WTC11 (cell line): ENCODE measurements at regions of chr5 and their contacts with region 1.

Region 1: GRCh38 chr5:140795259-140795641 is 598 bp downstream of the PCDHA2 start:
- DNase-seq: no peak
- ATAC-seq: peak; percentile 88
- H3K4me3 Mint-ChIP-seq: peak overlapping the region; percentile 87
- H3K27ac Mint-ChIP-seq: 0 out of 2 replicates have a peak overlapping the region, but pooled peaks have one; percentile 27
- H3K4me1 Mint-ChIP-seq: peaks cover 4% of the 10 kb centered on the region; the same call in 1 of the 2 replicates
- H3K27me3 Mint-ChIP-seq: no peaks in the 10 kb centered on the region
- CTCF ChIP-seq: no peak

Region 2: GRCh38 chr5:140821375-140822280 is 26.4 kb after region 1 on chr5 and contains the start of gene PCDHA5:
- CTCF ChIA-PET with region 1: interaction called, 10 read pairs
- POLR2A ChIA-PET with region 1: no interaction called
- DNase-seq: no peak
- ATAC-seq: no peak
- H3K4me3 Mint-ChIP-seq: peak within 1 kb of the TSS; percentile 30; the same call in 1 of the 2 replicates
- H3K27ac Mint-ChIP-seq: no peak within 1 kb of the TSS
- H3K4me1 Mint-ChIP-seq: no peaks in the 10 kb centered on the region
- H3K27me3 Mint-ChIP-seq: no peaks in the 10 kb centered on the region
- CTCF ChIP-seq: no peak
- total RNA-seq, gene PCDHA5: 0.85 to 0.94 TPM (median 0.90 TPM) in 3 replicates

Region 3: DNA sequence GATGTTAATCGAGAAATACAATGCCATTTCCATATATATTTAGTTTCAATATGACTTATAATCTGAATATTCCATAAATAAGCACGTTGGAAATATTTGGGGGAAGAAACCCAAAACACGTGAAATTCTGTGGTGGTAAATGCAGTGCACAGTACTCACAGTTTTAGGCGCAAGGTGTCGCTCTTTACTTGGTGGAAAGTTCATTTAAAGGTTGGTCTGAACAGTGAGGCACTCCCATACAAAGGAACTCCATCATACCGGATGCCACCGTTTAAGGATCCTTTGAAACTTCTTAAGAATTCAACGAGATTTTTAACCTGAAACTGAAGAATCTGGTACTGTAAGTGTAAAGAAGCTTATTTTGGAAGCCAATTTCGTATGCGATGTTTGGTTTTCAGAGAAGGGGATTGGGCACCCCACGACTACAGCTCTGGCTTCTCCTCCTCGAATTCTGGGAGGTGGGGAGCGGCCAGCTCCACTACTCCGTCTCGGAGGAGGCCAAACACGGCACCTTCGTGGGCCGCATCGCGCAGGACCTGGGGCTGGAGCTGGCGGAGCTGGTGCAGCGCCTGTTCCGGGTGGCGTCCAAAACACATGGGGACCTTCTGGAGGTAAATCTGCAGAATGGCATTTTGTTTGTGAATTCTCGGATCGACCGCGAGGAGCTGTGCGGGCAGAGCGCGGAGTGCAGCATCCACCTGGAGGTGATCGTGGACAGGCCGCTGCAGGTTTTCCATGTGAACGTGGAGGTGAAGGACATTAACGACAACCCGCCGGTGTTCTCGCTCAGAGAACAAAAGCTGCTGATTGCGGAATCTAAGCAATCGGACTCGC is 73.7 kb after region 1 on chr5 and contains the start of gene PCDHA11:
- CTCF ChIA-PET with region 1: interaction called, 17 read pairs
- POLR2A ChIA-PET with region 1: no interaction called
- DNase-seq: no peak
- ATAC-seq: peak; percentile 93
- H3K4me3 Mint-ChIP-seq: peak within 1 kb of the TSS; percentile 88
- H3K27ac Mint-ChIP-seq: peak within 1 kb of the TSS; percentile 78
- H3K4me1 Mint-ChIP-seq: peaks cover 16% of the 10 kb centered on the region
- H3K27me3 Mint-ChIP-seq: no peaks in the 10 kb centered on the region
- CTCF ChIP-seq: no peak
- total RNA-seq, gene PCDHA11: 5.8 to 8.7 TPM (median 7.9 TPM) in 3 replicates

Region 4: DNA sequence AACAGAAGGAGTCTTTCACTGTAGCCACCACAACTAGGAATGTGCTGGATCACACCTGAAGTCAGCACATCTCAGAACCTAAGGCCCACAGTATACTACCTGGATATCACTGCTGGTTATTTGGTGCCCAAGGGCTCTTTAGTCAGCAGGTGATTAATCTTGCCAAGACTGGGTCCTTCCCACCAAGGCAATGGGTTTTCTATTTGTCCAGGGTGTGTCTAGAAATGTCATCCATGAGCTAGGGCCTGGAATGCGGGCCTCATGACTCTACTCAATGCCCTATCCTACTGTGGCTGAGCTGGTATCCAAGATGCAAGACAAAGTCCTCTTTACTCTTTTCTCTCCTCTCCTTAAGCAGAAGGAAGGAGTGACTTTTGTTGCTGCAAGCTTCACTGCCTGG is 121.1 kb after region 1 on chr5:
- CTCF ChIA-PET with region 1: no interaction called
- POLR2A ChIA-PET with region 1: no interaction called
- DNase-seq: no peak
- ATAC-seq: no peak
- H3K4me3 Mint-ChIP-seq: no peak overlapping the region
- H3K27ac Mint-ChIP-seq: no peak overlapping the region
- H3K4me1 Mint-ChIP-seq: no peaks in the 10 kb centered on the region
- H3K27me3 Mint-ChIP-seq: no peaks in the 10 kb centered on the region; the same call in 1 of the 2 replicates
- CTCF ChIP-seq: no peak